GM13977 (cell line): ENCODE measurements at regions of chr10 and their contacts with region 1.

Region 1: DNA sequence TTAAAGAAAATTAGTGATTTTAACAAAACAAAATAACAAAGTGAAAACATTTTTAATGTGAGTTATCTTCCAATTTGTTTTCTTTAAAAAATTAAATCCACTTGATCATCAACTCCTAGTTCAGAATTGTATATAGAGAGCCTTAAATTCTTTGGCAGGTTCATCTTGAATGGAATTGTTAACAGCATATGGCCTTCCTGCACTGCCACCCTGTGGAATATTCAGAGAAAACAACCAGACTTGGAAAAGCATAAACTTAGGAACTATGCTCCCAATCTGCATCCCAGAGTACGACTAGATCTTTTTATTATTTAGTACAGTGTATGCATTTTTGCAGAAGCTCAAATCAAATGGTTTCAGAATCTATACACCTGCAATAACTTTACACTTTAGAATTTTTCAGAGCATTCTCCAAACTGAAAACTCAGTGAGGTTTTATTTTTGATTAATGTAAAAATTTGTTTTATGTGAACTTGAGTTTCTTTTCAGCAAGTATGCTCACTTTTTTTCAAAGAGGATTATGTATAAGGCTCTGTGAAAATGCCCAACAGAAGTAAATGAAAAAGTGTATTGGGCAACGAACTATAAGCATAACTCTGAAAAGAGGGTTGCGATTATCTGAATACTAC is 44.9 kb upstream of the ANK3 start:
- DNase-seq: peak; percentile 32
- CTCF ChIP-seq: peak; percentile 65

Region 2: GRCh38 chr10:60099998-60100747 is 334.4 kb before region 1 on chr10:
- in situ Hi-C with region 1: loop called (anchors 25 kb)
- DNase-seq: peak; percentile 20
- CTCF ChIP-seq: peak; percentile 56

Region 3: DNA sequence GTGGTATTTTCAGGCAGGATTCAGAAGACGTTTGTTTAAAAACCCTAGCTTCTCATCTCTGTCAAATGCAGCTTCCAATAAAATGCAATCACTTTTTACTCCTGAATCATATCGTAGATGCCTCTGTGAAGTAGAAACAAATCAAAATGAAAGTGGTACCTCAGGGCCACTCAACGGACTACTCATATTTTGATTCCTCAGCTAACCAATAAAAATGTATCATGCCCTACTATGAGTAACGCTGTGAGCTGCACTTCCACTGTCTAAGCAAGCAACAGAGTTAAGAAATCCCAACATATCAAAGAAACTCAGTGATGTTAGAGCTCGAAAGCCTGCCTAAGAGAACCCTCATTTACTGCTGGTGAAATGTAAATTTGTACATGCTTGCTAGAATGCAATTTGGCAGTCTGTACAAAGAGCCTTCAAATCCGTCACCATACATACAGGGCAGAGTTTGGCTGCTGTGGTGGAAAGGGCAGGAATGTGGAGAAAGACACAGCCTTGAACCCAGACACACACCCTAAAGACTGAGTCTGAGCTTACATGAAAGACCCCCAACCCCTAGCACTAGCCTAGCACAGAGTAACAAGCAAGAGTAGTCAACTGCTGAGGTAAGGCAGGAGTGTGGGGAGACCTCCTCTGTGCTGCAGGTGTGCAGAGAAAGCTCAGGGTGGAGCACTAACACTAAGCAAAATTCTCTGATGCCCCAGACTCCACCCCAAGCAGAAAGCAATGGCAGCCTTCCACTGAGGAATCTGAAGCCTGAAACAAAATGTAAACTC is 196.4 kb before region 1 on chr10:
- in situ Hi-C with region 1: loop called (anchors 10 kb)
- DNase-seq: peak; percentile 34
- CTCF ChIP-seq: peak; percentile 57

Region 4: DNA sequence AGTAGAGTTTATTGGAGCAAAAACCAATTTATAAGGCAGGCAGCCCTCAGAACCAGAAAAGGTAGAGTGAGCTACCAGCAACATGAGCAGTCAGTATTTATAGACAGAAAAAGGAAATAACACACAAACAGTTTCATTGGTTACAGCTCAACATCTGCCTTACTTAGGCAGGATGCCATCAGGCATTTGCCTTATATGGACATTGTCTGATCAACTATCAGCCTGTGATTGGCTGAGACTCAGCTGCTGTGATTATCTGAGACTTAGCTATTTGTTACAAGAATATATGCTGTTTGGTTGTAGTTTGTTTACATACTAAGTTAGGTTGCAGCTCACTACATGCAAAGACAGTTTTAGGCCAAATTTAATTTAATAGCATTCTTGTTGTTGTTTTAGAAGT is 283.3 kb after region 1 on chr10:
- in situ Hi-C with region 1: no loop called
- DNase-seq: no peak
- CTCF ChIP-seq: no peak